ENCODE measurements at regions of chr18 and their contacts with region 1.

Region 1: DNA sequence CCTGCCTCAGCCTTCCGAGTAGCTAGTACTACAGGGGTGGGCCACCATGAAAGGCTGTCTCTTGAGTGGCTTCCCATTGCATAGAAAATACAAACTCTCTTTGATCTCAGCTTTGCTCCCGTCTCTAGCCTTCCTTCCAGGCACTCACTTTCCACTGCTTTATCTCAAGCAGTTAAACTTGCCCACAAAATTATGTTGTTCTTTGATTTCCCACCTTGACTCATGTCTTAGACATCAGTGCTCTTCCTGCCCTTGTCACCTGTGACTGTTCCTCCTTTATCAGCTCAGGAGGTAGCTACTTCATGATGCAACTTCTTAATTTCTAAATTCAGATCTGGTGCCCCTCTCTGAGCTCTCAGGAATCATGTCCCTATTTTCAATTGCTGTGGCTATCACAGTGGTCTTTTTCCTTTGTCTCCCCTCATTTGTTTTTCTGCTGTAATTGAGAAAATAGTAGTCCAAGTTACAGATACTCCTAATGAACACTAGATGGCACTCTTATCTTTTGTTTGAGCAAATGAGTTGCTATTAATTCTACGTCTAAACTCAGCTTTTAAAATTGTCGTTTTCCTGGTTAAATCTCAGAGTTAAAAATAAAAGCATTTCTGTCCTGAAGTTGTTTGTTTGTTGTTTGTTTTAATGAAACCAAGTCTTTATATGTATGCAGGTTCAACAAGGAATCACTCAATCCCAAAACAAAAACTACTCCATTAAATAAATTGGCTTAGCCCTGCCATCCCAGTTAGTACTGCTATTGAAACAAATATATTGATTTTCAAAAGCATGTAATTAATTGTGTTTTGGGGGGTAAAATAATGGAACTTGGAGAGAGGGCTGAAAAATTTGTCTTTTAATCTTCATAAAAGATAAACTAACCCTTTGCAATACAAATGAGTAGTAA is 46.9 kb upstream of the GREB1L start:
- DNase-seq: no peak
- H3K4me3 Mint-ChIP-seq: no peak overlapping the region
- H3K27ac Mint-ChIP-seq: no peak overlapping the region
- H3K4me1 Mint-ChIP-seq: no peaks in the 10 kb centered on the region
- H3K27me3 Mint-ChIP-seq: peaks cover 22% of the 10 kb centered on the region

Region 2: DNA sequence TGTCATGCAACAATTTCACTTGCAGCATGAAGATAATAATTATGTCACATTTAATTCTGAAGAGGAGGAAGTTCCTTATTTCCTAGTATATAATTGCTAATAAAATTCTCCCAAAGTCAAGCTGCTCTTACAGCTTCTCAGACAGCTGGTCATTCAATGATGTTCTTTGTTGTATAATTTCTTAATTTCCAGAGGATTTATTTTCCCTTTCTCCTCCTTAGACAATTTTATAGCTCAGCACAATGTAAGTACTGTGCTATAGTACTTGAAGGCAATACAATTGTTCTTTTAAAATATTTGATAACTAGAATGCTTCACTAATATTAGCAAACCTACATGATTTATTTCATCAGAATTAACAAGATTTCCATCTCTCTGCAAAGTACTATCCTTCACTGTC is 156.9 kb before region 1 on chr18:
- CTCF ChIA-PET with region 1: interaction called, 10 read pairs
- intact Hi-C with region 1: no loop called
- DNase-seq: no peak
- H3K4me3 Mint-ChIP-seq: no peak overlapping the region
- H3K27ac Mint-ChIP-seq: no peak overlapping the region
- H3K4me1 Mint-ChIP-seq: peaks cover 1% of the 10 kb centered on the region
- H3K27me3 Mint-ChIP-seq: no peaks in the 10 kb centered on the region

Region 3: DNA sequence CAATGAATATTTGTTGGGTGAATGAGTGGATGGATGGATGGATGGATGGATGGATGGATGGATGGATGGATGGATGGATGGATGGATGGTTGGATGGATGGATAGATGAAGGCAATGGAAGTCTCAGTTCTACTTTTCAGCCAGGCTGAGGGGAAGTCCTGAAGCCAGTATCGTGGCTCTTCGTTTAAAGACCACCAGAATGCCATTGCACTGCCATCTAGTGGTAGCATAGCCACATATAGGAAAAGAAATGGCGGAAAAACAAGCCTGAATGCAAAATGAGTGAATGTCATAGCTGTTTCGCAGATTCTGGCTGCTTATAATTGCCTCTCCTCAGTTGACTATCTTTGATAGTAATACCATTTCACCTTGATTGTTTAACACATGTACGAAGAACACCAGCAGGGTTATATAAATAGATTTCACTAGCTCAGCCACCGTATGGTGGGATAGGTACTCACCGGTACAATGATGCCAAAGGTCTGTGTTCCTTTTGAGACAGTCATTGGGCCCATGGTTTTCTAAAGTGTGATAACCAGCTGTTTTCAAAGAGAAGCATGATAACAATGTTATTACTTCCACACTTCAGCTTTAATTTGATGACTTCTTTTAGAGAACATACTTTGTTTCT is 15.4 kb before region 1 on chr18:
- CTCF ChIA-PET with region 1: interaction called, 11 read pairs
- intact Hi-C with region 1: no loop called
- DNase-seq: peak; percentile 72
- H3K4me3 Mint-ChIP-seq: no peak overlapping the region
- H3K27ac Mint-ChIP-seq: no peak overlapping the region
- H3K4me1 Mint-ChIP-seq: peaks cover 3% of the 10 kb centered on the region
- H3K27me3 Mint-ChIP-seq: no peaks in the 10 kb centered on the region

Region 4: DNA sequence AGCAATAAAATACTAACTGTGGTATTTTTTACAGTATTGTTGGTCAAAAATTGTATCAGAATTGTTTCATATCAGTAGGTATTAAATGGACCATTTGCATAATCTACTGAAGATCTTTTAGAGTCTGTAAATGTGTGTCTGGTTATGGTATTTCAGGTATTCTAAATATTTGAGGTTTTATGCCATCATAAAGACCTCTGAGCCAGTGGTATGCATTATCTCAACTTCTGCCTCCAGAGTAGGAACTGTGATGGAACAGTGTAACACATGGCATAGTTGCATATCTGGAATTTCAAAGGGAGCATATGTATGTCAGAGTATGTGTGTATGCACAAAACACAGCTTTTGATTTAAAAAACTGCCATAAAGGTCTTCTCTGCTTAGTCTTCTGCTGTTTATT is 62.3 kb after region 1 on chr18:
- CTCF ChIA-PET with region 1: no interaction called
- intact Hi-C with region 1: no loop called
- DNase-seq: no peak
- H3K4me3 Mint-ChIP-seq: no peak overlapping the region
- H3K27ac Mint-ChIP-seq: no peak overlapping the region
- H3K4me1 Mint-ChIP-seq: no peaks in the 10 kb centered on the region
- H3K27me3 Mint-ChIP-seq: peaks cover 12% of the 10 kb centered on the region

Region 5: DNA sequence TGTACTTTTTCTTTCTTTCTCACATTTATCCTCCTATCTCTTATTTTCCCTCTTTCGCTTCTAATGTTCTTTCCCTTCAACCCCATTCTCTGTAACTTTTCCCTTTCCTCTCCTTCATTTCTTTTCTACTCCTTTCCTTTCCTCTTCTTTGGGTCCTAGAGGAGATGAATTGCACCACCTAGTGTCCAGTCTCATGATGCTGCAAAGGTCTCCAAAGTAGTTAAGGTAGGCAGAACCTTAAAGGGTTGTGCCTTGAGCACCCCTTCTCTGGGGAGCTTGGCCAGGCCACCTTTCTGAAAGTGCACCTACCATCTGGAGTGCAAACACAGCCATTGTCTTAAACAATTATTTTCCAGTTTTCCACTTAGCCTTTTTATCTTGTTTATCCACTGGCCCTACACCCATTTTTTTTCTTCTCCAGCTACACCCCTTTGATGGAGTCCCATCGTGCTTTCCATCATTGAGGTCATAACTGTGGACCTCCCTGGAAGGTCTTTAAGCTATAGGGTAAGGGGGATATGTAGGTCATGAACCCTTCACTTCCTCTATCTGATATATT is 249.4 kb after region 1 on chr18:
- CTCF ChIA-PET with region 1: interaction called, 4 read pairs
- intact Hi-C with region 1: loop called (anchors 1 kb)
- DNase-seq: peak; percentile 20
- H3K4me3 Mint-ChIP-seq: no peak overlapping the region
- H3K27ac Mint-ChIP-seq: no peak overlapping the region
- H3K4me1 Mint-ChIP-seq: no peaks in the 10 kb centered on the region
- H3K27me3 Mint-ChIP-seq: peaks cover 12% of the 10 kb centered on the region

Region 6: GRCh38 chr18:21612125-21612991 is 417.2 kb after region 1 on chr18 and contains the start of gene SNRPD1:
- CTCF ChIA-PET with region 1: no interaction called
- intact Hi-C with region 1: loop called (anchors 10 kb)
- DNase-seq: peak; percentile 89
- H3K4me3 Mint-ChIP-seq: peak within 1 kb of the TSS; percentile 96
- H3K27ac Mint-ChIP-seq: peak within 1 kb of the TSS; percentile 97
- H3K4me1 Mint-ChIP-seq: peaks cover 35% of the 10 kb centered on the region
- H3K27me3 Mint-ChIP-seq: no peaks in the 10 kb centered on the region
- total RNA-seq, gene SNRPD1: 133 to 144 TPM

Region 7: DNA sequence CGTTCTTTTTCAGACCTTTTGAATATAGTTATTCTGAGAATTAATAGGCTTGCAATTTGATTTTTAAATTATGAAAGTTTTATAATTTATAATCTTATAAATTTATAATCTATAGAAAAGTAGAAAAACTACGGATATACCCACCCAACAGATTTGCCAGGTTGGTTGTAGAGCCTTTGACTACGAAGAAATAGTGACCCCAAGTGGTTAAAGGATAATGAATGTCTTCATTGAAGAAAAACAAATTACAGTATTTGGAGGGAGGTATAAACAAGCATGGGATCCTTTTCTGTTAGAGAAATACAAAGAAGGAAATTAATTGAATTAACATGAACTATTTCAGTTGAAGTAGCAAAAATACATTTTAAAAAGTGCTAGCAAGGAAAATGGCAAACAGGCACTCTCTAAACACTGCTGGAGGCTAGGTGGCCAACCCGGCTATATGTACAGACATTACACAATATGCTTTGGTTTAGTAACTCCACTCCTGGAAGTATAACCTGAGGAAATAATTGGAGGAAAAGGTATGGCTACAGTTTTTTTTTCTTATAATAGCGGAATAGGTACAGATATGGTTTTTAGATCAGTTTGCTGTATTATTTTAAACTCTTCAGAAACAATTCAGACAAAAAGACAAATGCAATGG is 656.3 kb after region 1 on chr18:
- CTCF ChIA-PET with region 1: no interaction called
- intact Hi-C with region 1: loop called (anchors 5 kb)
- DNase-seq: no peak
- H3K4me3 Mint-ChIP-seq: no peak overlapping the region
- H3K27ac Mint-ChIP-seq: no peak overlapping the region
- H3K4me1 Mint-ChIP-seq: peaks cover 6% of the 10 kb centered on the region
- H3K27me3 Mint-ChIP-seq: no peaks in the 10 kb centered on the region

Region 8: DNA sequence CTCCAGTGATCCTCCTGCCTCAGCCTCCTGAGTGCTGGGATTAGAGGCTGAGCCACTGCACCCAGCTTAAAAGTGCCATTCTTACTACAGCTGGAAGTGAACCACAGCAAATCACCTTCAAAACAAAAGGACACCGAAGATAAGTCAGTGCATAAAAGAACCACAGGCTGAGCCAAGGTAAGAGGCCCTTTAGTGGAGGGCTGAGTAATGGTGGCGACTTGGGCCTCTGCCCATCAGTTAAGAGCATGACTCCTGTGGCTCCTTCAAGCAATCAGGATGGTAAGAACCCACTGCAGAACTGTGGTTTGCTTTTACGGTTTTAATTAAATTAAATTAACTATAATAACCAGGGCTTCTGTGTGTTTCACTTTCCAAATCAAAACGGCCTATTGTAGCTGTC is 1147.5 kb after region 1 on chr18:
- CTCF ChIA-PET with region 1: no interaction called
- intact Hi-C with region 1: no loop called
- DNase-seq: no peak
- H3K4me3 Mint-ChIP-seq: no peak overlapping the region
- H3K27ac Mint-ChIP-seq: peak overlapping the region; percentile 24
- H3K4me1 Mint-ChIP-seq: peaks cover 4% of the 10 kb centered on the region
- H3K27me3 Mint-ChIP-seq: peaks cover 21% of the 10 kb centered on the region

Measured in activated naive CD4-positive, alpha-beta T cell treated with anti-CD3 and anti-CD28 coated beads for 36 hours (primary cell).